Breast epithelium (tissue), 4 donors: ENCODE measurements at regions of chr1 and their contacts with region 1.

Region 1: GRCh38 chr1:15997637-15998240 is 6.3 kb upstream of the SRARP start:
- DNase-seq: no peak
- H3K4me3 ChIP-seq: no peak overlapping the region
- H3K27ac ChIP-seq: no peak overlapping the region
- H3K4me1 ChIP-seq: no peaks in the 10 kb centered on the region
- H3K27me3 ChIP-seq: no peaks in the 10 kb centered on the region
- CTCF ChIP-seq: no peak
- POLR2A ChIP-seq: no peak

Region 2: DNA sequence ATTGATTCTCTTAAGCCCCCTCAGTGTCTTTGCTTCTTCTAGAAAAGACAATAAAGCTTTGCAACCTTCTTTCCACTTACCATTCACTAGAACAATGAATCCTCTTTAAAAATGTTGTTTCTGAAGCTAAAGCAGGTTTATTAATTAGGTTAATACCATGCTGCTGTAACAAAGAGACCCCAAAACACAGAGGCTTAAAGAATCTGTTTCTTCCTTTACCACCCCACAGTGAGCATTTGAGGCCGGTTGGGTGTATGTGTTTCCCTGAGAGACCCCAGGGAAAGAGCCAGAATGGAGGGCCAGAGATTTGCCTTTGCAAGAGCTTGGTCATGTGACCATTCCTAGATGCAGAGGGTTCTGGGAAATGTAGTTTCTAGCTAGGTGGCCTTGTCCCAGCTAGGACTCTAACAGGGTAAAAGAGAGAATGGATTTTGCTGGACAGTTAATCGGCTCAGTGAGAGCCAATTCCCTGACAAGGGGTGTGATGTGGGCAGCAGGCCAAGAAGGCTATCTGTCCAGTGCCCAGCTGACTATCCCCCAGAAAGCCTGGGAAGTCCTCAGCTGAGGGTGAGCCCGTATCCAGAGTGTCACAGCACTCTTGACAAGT is 1036.0 kb before region 1 on chr1:
- intact Hi-C with region 1: no loop called
- DNase-seq: no peak
- H3K4me3 ChIP-seq: no peak overlapping the region
- H3K27ac ChIP-seq: no peak overlapping the region
- H3K4me1 ChIP-seq: peaks cover 0 to 4% of the 10 kb centered on the region in 2 donors
- H3K27me3 ChIP-seq: no peaks in the 10 kb centered on the region
- CTCF ChIP-seq: no peak
- POLR2A ChIP-seq: no peak

Region 3: DNA sequence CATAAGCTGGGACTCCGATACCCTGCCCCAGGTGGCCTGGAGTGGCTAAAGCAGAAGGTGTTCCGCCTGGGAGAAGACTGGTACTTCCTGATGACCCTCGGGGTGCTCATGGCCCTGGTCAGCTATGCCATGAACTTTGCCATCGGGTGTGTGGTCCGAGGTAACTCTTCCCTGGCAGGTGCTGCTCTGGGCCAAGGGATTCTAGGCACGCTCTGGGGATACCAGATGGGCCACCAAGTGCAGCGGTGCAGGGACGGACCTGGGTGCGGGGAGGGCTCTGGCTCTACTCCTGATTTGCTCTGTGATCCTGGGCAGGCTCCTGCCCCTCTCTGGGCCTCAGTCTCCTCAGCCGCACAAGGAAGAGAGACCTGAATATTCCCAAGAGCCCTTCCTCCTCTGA is 26.0 kb after region 1 on chr1:
- intact Hi-C with region 1: loop called (anchors 1 kb)
- DNase-seq: no peak
- H3K4me3 ChIP-seq: no peak overlapping the region
- H3K27ac ChIP-seq: no peak overlapping the region
- H3K4me1 ChIP-seq: peaks cover 5 to 6% of the 10 kb centered on the region in 2 donors
- H3K27me3 ChIP-seq: peaks cover 0 to 4% of the 10 kb centered on the region in 2 donors
- CTCF ChIP-seq: no peak
- POLR2A ChIP-seq: no peak